H1 (cell line): ENCODE measurements at regions of chr3 and their contacts with region 1.

Region 1: DNA sequence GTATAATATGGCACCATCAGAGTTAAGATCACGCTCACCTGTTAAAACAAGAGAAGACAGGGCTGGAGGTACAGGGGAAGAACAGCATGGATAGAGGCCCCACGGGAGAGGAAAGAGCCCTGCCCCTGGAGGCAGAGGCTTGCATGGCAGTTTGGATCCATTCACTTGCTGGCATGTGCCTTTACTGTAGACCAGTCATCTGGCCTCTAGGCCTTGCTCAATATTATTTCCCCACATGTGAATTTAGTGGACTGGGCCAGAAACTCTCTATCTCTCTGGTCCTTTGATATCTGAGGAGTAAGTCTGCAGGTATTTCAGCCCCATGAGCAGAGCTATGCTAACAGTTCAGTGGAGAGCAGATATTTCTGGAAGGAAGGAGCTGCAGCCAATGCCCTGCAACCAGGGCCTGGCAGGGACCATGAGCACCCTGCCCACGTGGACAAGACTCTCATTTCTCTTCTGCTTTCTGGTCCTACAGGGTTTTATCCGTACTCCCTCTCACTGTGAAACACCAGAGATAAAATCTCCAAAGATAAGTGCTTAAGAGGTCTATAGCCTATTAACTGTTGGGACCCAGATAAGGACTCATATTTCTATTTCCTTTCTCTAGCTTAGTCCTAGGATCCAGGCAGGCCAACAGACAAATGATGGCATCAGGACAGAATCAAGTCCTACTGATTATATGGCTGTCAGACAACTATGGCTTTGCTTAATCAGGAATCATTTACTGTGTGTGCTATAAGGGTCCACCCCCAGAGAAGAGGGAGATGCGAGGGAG is 65.0 kb downstream of the CLDN11 start:
- DNase-seq: peak in 1 of 2 experiments; percentile 55
- H3K4me3 ChIP-seq: no peak overlapping the region
- H3K27ac ChIP-seq: no peak overlapping the region
- H3K4me1 ChIP-seq: peaks cover 0 to 3% (median 1%) of the 10 kb centered on the region in 4 experiments; a peak in 2 of 7 replicates
- H3K27me3 ChIP-seq: no peaks in the 10 kb centered on the region
- CTCF ChIP-seq: peak; percentile 32 to 67 (median 61)
- EP300 ChIP-seq: no peak
- POLR2A ChIP-seq: no peak
- RAD21 ChIP-seq: peak; percentile 23 to 34; a peak in 3 of 4 replicates

Region 2: DNA sequence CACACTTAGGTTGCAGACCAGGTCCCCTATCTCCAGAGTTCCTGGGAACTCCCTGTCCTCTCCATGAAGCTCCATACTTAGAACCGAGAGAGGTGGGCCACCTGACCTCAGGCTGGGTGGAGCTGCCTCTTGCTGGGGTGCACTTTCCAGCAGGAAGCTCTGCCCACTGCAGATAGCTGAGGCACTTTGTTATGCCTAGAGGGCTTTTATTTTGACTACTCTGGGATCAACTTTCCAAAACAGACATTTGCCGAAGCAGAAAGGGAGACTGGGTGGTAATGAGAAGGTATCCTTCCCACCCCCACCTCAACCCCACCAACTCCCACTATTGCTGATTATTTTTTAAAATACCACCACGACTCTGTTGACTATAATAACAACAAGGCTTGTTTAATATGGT is 10.3 kb before region 1 on chr3:
- CTCF ChIA-PET with region 1: interaction called, 11 read pairs
- POLR2A ChIA-PET with region 1: interaction called, 5 read pairs
- DNase-seq: peak in 1 of 2 experiments; percentile 19
- H3K4me3 ChIP-seq: no peak overlapping the region
- H3K27ac ChIP-seq: no peak overlapping the region
- H3K4me1 ChIP-seq: peaks cover 0 to 6% (median 2%) of the 10 kb centered on the region in 4 experiments; a peak in 1 of 7 replicates
- H3K27me3 ChIP-seq: no peaks in the 10 kb centered on the region
- CTCF ChIP-seq: no peak
- EP300 ChIP-seq: no peak
- POLR2A ChIP-seq: no peak
- RAD21 ChIP-seq: no peak

Region 3: DNA sequence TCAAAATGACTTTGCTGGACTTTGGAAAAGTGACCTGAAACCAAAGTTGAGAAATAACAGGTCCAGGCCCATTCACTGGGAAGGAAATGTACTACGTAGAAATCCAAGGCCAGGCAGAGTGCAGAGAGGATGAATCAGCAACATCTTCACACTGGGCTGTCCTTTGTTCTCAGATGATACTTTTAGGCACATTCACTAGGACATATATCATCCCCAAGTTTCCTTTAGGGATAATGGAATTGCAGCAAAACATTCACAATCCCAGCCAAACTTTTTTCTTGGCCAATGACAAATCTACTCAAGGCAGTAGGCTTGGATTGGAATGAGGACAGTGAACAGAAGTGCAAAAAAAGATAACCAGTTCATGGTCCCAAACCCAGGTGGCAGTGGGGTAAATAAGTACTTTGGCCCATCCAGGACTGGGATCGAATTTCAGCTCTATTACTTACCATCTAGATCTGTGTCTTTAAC is 10.1 kb after region 1 on chr3:
- CTCF ChIA-PET with region 1: interaction called, 35 read pairs
- POLR2A ChIA-PET with region 1: no interaction called
- DNase-seq: no peak
- H3K4me3 ChIP-seq: no peak overlapping the region
- H3K27ac ChIP-seq: no peak overlapping the region
- H3K4me1 ChIP-seq: peaks cover 0 to 3% (median 0%) of the 10 kb centered on the region in 4 experiments; a peak in 1 of 7 replicates
- H3K27me3 ChIP-seq: no peaks in the 10 kb centered on the region
- CTCF ChIP-seq: no peak
- EP300 ChIP-seq: no peak
- POLR2A ChIP-seq: no peak
- RAD21 ChIP-seq: no peak

Region 4: DNA sequence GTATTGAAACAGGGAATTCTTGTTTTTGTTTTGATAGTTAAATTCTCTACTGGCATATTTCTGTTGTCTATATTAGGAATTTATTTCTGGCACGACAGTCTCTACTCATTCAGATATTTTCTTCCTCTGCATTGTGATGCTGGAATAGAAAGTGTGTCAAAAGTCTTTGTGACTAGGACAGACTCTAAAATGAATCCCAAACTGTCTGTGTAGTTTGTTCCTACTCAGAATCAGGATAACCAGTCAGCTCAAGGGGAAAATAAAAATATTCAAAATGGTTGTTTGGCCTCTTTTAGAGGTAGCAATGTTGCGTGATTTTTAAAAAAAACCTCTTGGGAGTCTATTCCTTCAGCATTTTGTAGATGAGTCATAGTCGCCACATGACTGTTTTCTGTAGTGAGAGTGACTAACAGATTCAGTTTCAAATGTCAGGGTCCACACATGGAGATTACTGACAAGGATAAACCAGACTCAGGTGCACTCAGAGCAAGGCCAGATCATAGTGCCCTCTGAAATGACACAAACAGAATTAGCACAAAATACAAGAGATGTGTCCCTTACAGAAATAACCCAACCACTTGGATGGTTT is 89.1 kb after region 1 on chr3:
- CTCF ChIA-PET with region 1: no interaction called
- POLR2A ChIA-PET with region 1: no interaction called
- DNase-seq: no peak
- H3K4me3 ChIP-seq: no peak overlapping the region
- H3K27ac ChIP-seq: no peak overlapping the region
- H3K4me1 ChIP-seq: no peaks in the 10 kb centered on the region
- H3K27me3 ChIP-seq: no peaks in the 10 kb centered on the region
- CTCF ChIP-seq: no peak
- EP300 ChIP-seq: no peak
- POLR2A ChIP-seq: no peak
- RAD21 ChIP-seq: no peak